Caco-2 (cell line): ENCODE measurements at regions of chr20 and their contacts with region 1.

Region 1: DNA sequence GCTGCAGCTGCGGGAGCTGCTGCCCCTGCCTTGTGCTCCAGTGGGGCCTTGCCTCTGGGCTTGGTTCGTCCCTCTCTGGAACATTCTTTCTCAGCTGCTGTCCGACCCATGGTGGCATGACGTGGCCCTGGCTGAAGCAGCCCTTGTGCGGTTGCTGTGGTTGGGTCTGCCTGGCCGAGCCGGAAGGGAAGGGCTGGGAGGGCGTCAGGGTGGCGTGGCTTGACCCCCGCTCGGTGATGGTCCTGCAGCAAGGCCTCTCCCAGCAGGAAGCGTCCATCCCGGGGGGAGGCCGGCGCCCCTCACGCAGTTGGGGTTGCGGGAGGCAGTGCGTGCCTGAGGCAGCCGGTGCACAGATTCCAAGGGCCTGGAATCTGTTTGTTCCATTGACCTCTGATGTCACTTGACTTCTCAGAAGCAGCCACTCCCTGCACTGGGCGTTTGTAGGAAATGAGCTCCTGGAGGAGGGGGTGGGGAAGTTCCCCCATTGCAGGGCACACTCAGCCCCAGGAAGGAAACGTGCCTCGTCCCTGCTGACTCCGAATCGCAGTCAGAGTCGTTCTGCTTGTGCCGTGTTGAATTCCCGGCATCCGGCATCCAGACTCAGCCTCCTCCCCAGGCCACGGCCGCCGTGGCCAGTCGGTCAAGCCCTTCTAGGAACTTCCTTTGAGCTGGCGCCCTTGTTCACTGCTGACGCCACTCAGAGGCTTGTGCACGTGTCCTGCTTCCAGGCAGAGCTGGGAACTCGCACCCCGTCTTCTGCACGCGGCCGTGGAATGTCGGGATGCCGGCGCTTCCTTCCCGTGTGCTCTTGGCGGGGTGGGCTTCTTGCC is 9.7 kb upstream of the TNFRSF6B start:
- DNase-seq: peak in 1 of 2 experiments; percentile 89
- H3K4me3 ChIP-seq: no peak overlapping the region
- H3K4me3 Mint-ChIP-seq: no peak overlapping the region
- H3K27ac Mint-ChIP-seq: peak overlapping the region; percentile 67
- H3K4me1 ChIP-seq: peaks cover 35% of the 10 kb centered on the region
- H3K4me1 Mint-ChIP-seq: no peaks in the 10 kb centered on the region
- H3K27me3 ChIP-seq: no peaks in the 10 kb centered on the region
- H3K27me3 Mint-ChIP-seq: no peaks in the 10 kb centered on the region
- CTCF ChIP-seq: no peak

Region 2: DNA sequence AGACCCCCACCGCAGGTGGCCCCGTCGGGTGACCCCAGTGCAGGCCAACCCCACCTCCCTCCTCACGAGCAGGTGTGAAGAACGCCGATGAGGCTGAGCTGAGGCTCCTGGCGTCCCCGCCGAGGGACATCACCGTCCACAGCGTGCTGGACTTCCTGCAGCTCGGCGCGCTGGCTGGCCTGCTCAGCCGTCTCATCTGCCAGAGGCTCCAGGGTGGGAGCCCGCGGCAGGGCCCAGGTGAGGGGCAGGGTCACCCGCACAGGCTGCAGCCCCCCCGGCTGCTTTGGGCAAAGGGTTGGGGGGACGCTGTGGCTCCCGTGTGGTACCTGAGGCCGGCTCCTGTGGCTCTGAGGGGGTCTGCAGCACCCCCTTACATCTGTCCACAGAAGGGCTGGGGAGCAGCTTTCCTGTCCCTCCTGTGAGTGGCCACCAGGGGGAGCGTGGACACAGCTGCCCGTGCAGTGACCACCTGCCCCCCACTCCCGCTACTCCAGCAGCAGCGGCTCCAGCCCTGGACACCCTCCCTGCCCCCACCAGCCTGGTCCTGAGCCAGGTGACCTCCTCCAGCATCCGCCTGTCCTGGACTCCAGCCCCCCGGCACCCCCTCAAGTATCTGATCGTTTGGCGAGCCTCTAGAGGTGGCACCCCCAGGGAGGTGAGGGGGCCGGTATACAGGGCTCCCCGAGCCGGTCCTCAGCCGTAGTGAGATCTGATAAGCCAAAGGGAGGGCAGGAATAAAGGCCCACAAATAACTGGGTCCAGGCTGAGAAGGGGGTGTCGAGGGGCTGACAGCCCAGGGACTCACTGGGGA is 377.2 kb before region 1 on chr20:
- CTCF ChIA-PET with region 1: no interaction called
- POLR2A ChIA-PET with region 1: no interaction called
- intact Hi-C with region 1: no loop called
- DNase-seq: peak; percentile 79 to 84
- H3K4me3 ChIP-seq: no peak overlapping the region
- H3K4me3 Mint-ChIP-seq: no peak overlapping the region
- H3K27ac Mint-ChIP-seq: no peak overlapping the region
- H3K4me1 ChIP-seq: no peaks in the 10 kb centered on the region
- H3K4me1 Mint-ChIP-seq: no peaks in the 10 kb centered on the region
- H3K27me3 ChIP-seq: peaks cover 1% of the 10 kb centered on the region; the same call in 1 of the 2 replicates
- H3K27me3 Mint-ChIP-seq: peaks cover 3% of the 10 kb centered on the region
- CTCF ChIP-seq: peak; percentile 99 to 100

Region 3: GRCh38 chr20:63522091-63522868 is 164.4 kb before region 1 on chr20:
- CTCF ChIA-PET with region 1: no interaction called
- POLR2A ChIA-PET with region 1: no interaction called
- intact Hi-C with region 1: no loop called
- DNase-seq: no peak
- H3K4me3 ChIP-seq: no peak overlapping the region
- H3K4me3 Mint-ChIP-seq: peak overlapping the region; percentile 92
- H3K27ac Mint-ChIP-seq: peak overlapping the region; percentile 95
- H3K4me1 ChIP-seq: peaks cover 14% of the 10 kb centered on the region
- H3K4me1 Mint-ChIP-seq: no peaks in the 10 kb centered on the region
- H3K27me3 ChIP-seq: no peaks in the 10 kb centered on the region
- H3K27me3 Mint-ChIP-seq: no peaks in the 10 kb centered on the region
- CTCF ChIP-seq: no peak

Region 4: DNA sequence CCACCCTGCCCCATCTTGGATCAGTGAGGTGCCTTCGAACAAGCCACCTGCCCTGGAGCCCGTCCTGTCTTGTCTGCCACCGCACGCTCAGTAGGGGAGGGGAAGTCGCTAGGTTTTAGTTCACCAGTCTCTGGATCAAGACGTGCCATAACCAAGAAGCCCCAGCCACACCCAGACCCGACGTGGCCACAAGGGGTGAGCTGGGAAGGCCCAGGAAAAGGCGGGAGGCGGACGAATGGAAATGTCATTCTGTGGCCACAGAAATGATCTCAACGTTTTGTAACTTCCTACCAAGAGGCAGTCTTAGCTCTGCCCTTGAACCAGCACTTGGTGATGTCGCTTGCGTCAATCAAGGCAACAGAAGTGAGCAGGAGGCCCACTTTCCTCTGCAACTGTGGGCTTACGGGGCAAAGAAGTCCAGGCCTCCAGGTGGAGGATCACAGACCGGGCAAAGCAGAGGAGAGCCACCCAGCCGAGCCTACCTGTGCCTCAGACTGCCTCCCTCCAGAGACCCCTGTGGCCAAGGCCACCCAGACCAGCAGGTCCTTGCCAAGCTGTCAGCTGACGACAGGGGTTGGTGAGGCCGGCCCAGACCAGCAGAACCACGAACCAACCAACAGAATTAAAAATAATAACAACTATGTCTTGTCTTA is 74.3 kb before region 1 on chr20:
- CTCF ChIA-PET with region 1: no interaction called
- POLR2A ChIA-PET with region 1: interaction called, 11 read pairs
- intact Hi-C with region 1: no loop called
- DNase-seq: no peak
- H3K4me3 ChIP-seq: no peak overlapping the region
- H3K4me3 Mint-ChIP-seq: no peak overlapping the region
- H3K27ac Mint-ChIP-seq: no peak overlapping the region
- H3K4me1 ChIP-seq: no peaks in the 10 kb centered on the region
- H3K4me1 Mint-ChIP-seq: no peaks in the 10 kb centered on the region
- H3K27me3 ChIP-seq: no peaks in the 10 kb centered on the region
- H3K27me3 Mint-ChIP-seq: no peaks in the 10 kb centered on the region
- CTCF ChIP-seq: no peak

Region 5: GRCh38 chr20:63698739-63699465 is 12.2 kb after region 1 on chr20:
- CTCF ChIA-PET with region 1: no interaction called
- POLR2A ChIA-PET with region 1: no interaction called
- intact Hi-C with region 1: no loop called
- DNase-seq: peak; percentile 41 to 67
- H3K4me3 ChIP-seq: no peak overlapping the region
- H3K4me3 Mint-ChIP-seq: peak overlapping the region; percentile 11
- H3K27ac Mint-ChIP-seq: peak overlapping the region; percentile 30
- H3K4me1 ChIP-seq: peaks cover 26% of the 10 kb centered on the region
- H3K4me1 Mint-ChIP-seq: peaks cover 11% of the 10 kb centered on the region
- H3K27me3 ChIP-seq: no peaks in the 10 kb centered on the region
- H3K27me3 Mint-ChIP-seq: peaks cover 2% of the 10 kb centered on the region
- CTCF ChIP-seq: no peak